CD4-positive, alpha-beta T cell (primary cell): ENCODE measurements at regions of chr2 and their contacts with region 1.

Region 1: GRCh38 chr2:65186872-65187851 is 40.5 kb upstream of the ACTR2 start:
- DNase-seq: peak; percentile 43 to 78 (median 58)
- ATAC-seq: peak; percentile 96
- H3K4me3 ChIP-seq: no peak overlapping the region
- H3K4me3 Mint-ChIP-seq: no peak overlapping the region
- H3K27ac ChIP-seq: no peak overlapping the region
- H3K27ac Mint-ChIP-seq: no peak overlapping the region
- H3K4me1 ChIP-seq: peaks cover 5% of the 10 kb centered on the region
- H3K4me1 Mint-ChIP-seq: peaks cover 9% of the 10 kb centered on the region
- H3K27me3 ChIP-seq: peaks cover 3 to 4% of the 10 kb centered on the region in 2 experiments
- H3K27me3 Mint-ChIP-seq: peaks cover 29% of the 10 kb centered on the region
- CTCF ChIP-seq: peak; percentile 80

Region 2: GRCh38 chr2:65576861-65577601 is 389.9 kb after region 1 on chr2:
- CTCF ChIA-PET with region 1: no interaction called
- POLR2A ChIA-PET with region 1: no interaction called
- intact Hi-C with region 1: loop called in 1 of 2 experiments (anchors 5 kb)
- DNase-seq: no peak
- ATAC-seq: no peak
- H3K4me3 ChIP-seq: no peak overlapping the region
- H3K4me3 Mint-ChIP-seq: no peak overlapping the region
- H3K27ac ChIP-seq: no peak overlapping the region
- H3K27ac Mint-ChIP-seq: no peak overlapping the region
- H3K4me1 ChIP-seq: no peaks in the 10 kb centered on the region
- H3K4me1 Mint-ChIP-seq: no peaks in the 10 kb centered on the region
- H3K27me3 ChIP-seq: no peaks in the 10 kb centered on the region
- H3K27me3 Mint-ChIP-seq: peaks cover 18% of the 10 kb centered on the region
- CTCF ChIP-seq: no peak